CD4-positive, alpha-beta T cell (primary cell): ENCODE measurements at regions of chr1 and their contacts with region 1.

Region 1: GRCh38 chr1:92583821-92584760 is 97.4 kb upstream of the GFI1 start:
- DNase-seq: peak in 3 of 14 experiments; percentile 58 to 89 (median 66)
- ATAC-seq: peak; percentile 93
- H3K4me3 ChIP-seq: peak overlapping the region; percentile 34
- H3K4me3 Mint-ChIP-seq: peak overlapping the region; percentile 34
- H3K27ac ChIP-seq: peak overlapping the region; percentile 23 to 56
- H3K27ac Mint-ChIP-seq: peak overlapping the region; percentile 61
- H3K4me1 ChIP-seq: peaks cover 13% of the 10 kb centered on the region
- H3K4me1 Mint-ChIP-seq: peaks cover 59% of the 10 kb centered on the region
- H3K27me3 ChIP-seq: no peaks in the 10 kb centered on the region
- H3K27me3 Mint-ChIP-seq: no peaks in the 10 kb centered on the region
- CTCF ChIP-seq: no peak

Region 2: DNA sequence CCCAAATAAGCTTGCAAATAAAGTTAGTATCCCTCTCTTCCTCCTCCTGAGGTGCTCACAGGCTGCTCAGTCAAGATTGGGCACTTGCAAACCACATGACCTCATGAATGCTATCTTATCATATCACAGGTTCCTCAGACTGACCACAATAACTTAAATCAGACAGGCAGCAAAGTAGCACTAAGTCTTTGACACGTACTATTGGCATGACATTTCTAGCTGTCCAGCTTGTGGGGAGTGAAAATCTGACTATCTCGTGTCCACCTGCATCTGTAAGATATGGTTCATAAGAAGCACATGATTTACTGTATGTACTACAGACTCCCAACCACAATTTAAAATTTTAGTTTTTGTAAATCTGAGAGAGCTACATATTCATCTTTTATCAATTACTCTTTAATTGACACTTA is 39.3 kb before region 1 on chr1:
- CTCF ChIA-PET with region 1: no interaction called
- POLR2A ChIA-PET with region 1: interaction called, 4 read pairs
- intact Hi-C with region 1: loop called in 1 of 2 experiments (anchors 5 kb)
- DNase-seq: peak in 1 of 14 experiments; percentile 10
- ATAC-seq: no peak
- H3K4me3 ChIP-seq: no peak overlapping the region
- H3K4me3 Mint-ChIP-seq: no peak overlapping the region
- H3K27ac ChIP-seq: no peak overlapping the region
- H3K27ac Mint-ChIP-seq: no peak overlapping the region
- H3K4me1 ChIP-seq: no peaks in the 10 kb centered on the region
- H3K4me1 Mint-ChIP-seq: peaks cover 20% of the 10 kb centered on the region
- H3K27me3 ChIP-seq: no peaks in the 10 kb centered on the region
- H3K27me3 Mint-ChIP-seq: no peaks in the 10 kb centered on the region
- CTCF ChIP-seq: no peak